HepG2 (cell line): ENCODE measurements at regions of chr16 and their contacts with region 1.

Region 1: DNA sequence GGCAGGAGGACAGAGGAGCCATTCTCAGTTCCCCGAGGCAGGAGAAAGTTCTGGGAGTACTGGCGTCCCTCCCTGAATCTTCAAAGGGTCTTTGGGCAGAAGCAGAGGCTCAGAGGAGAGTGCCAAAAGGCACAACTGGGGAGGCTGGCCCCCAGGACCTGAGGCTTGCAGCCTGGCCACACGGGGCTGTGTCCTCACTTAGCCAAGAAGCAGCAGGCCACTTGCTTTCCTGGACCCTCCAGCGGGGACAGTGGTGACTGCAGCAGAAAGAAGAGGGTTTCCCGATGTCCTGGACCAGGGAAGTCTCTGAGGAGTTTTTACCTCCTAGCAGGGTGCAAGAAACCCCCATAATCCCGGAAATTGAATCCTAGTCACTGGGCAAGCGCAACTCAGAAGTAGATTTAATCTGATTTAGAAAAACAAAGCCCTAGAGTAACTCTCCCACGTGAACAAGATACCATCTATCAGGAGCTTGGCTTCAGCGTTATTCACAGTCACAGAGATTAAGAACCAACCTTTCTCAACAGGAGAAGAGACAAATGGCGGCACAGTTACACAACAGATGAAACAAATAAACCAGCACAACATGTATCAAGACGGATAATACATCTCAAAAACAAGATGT is 25.5 kb upstream of the BCO1 start:
- DNase-seq: no peak
- ATAC-seq: peak; percentile 80
- H3K4me3 ChIP-seq: no peak overlapping the region
- H3K27ac ChIP-seq: no peak overlapping the region
- H3K4me1 ChIP-seq: no peaks in the 10 kb centered on the region
- H3K27me3 ChIP-seq: peaks cover 12 to 50% of the 10 kb centered on the region in 2 experiments
- CTCF ChIP-seq: no peak
- EP300 ChIP-seq: no peak
- POLR2A ChIP-seq: no peak
- RAD21 ChIP-seq: no peak

Region 2: GRCh38 chr16:80924372-80924978 is 288.5 kb before region 1 on chr16:
- CTCF ChIA-PET with region 1: no interaction called
- POLR2A ChIA-PET with region 1: no interaction called
- in situ Hi-C with region 1: no loop called
- intact Hi-C with region 1: loop called (anchors 2 kb)
- DNase-seq: peak; percentile 54
- ATAC-seq: peak; percentile 96
- H3K4me3 ChIP-seq: no peak overlapping the region
- H3K27ac ChIP-seq: no peak overlapping the region
- H3K4me1 ChIP-seq: no peaks in the 10 kb centered on the region
- H3K27me3 ChIP-seq: no peaks in the 10 kb centered on the region
- CTCF ChIP-seq: peak; percentile 96
- EP300 ChIP-seq: no peak
- POLR2A ChIP-seq: no peak
- RAD21 ChIP-seq: peak; percentile 72